Tibial artery (tissue), 4 donors: ENCODE measurements at regions of chr15 and their contacts with region 1.

Region 1: GRCh38 chr15:75201609-75202250 is at the start of gene C15orf39:
- DNase-seq: peak; percentile 48 to 85
- H3K4me3 ChIP-seq: peak within 1 kb of the TSS; percentile 86 to 97
- H3K27ac ChIP-seq: peak within 1 kb of the TSS; percentile 97 to 100
- H3K4me1 ChIP-seq: peaks cover 0 to 43% (median 37%) of the 10 kb centered on the region in 4 donors
- H3K27me3 ChIP-seq: no peaks in the 10 kb centered on the region
- CTCF ChIP-seq: peak; percentile 89 to 98

Region 2: GRCh38 chr15:74735305-74735704 is 466.4 kb before region 1 on chr15:
- intact Hi-C with region 1: no loop called
- DNase-seq: no peak
- H3K4me3 ChIP-seq: no peak overlapping the region
- H3K27ac ChIP-seq: no peak overlapping the region
- H3K4me1 ChIP-seq: no peaks in the 10 kb centered on the region
- H3K27me3 ChIP-seq: peaks cover 0 to 59% of the 10 kb centered on the region in 2 donors
- CTCF ChIP-seq: no peak

Region 3: DNA sequence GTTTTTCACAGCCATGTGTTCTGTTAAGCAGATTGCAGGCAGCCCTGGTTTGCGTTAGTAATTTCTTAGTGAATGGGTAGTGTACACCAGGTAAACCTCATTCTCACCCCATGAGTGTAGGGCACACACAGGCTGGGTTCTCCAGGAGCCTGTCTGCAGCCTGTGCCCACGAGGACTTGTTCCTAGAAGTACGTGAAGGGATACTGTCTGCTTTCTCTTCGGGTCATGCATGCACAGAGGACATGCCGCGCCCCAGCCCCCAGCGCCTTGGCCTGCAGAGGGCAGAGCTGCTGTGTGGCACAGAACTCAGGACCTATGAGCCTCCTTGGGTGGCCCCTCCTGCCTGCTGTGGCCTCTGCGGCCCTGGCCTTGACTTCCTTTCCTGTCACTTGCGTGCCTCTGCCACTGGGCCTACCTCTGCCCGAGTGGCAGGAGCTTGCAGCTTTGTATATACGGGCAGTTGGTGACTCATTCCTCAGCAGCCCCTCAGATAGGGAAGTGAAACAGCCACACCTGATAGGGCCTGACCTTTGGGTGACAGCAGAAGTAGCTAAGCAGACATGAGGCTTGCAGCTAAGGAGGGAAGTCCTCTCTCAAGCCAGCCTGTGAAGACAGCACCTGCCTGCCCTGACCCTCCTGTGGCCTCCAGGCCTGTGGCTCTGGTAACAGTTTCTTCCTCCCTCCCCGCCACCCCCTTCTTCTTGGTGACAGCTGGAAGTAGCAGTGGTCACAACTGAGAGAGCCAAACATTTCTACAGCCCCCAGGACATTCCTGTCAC is 158.8 kb before region 1 on chr15:
- intact Hi-C with region 1: loop called (anchors 5 kb)
- DNase-seq: peak; percentile 76 to 90
- H3K4me3 ChIP-seq: no peak overlapping the region
- H3K27ac ChIP-seq: peak overlapping the region; percentile 88 to 89
- H3K4me1 ChIP-seq: peaks cover 0 to 58% (median 44%) of the 10 kb centered on the region in 4 donors
- H3K27me3 ChIP-seq: no peaks in the 10 kb centered on the region
- CTCF ChIP-seq: peak; percentile 55 to 57